Panc1 (cell line): ENCODE measurements at regions of chr7 and their contacts with region 1.

Region 1: GRCh38 chr7:79282063-79282694 is 171.3 kb downstream of the MAGI2 start:
- DNase-seq: peak; percentile 73
- ATAC-seq: peak; percentile 86
- H3K4me3 ChIP-seq: peak overlapping the region in 1 of 2 experiments; percentile 32; a peak in 2 of 4 replicates
- H3K27ac ChIP-seq: peak overlapping the region; percentile 97
- H3K4me1 ChIP-seq: peaks cover 46% of the 10 kb centered on the region
- H3K27me3 ChIP-seq: no peaks in the 10 kb centered on the region
- CTCF ChIP-seq: peak; percentile 75

Region 2: DNA sequence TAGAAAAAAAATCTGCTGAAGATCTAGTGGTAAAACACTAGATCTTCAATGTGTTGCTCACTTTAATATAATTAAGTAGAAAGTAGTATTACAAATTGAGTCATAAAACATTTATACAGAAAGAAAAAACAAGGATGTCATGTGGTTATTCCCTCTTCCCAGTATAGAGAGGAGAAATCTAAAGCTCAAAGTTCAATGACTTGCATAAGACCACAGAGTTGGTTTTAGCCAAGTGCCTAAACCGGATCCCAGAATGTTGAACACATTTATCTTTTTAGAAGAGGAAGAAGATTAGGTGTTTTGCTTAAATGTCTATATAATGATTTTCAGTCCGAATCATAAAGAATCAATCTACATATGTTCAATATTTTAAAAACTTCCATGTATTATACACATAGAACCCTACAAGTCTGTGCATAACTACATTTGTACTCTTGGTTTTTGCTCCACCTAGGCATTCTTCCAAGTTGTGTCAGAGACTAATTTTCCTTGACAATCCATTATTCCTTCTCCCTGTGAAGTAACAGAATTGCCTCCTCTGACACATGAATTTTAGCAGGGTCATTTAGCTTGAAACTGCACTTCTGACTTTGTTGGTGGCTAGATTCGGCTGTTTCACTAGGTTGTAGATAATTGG is 217.9 kb before region 1 on chr7:
- CTCF ChIA-PET with region 1: no interaction called
- POLR2A ChIA-PET with region 1: no interaction called
- in situ Hi-C with region 1: no loop called
- intact Hi-C with region 1: no loop called
- DNase-seq: no peak
- ATAC-seq: no peak
- H3K4me3 ChIP-seq: no peak overlapping the region
- H3K27ac ChIP-seq: no peak overlapping the region
- H3K4me1 ChIP-seq: no peaks in the 10 kb centered on the region
- H3K27me3 ChIP-seq: no peaks in the 10 kb centered on the region
- CTCF ChIP-seq: no peak

Region 3: GRCh38 chr7:79590916-79591623 is 308.9 kb after region 1 on chr7:
- CTCF ChIA-PET with region 1: no interaction called
- POLR2A ChIA-PET with region 1: no interaction called
- in situ Hi-C with region 1: no loop called
- intact Hi-C with region 1: no loop called
- DNase-seq: no peak
- ATAC-seq: no peak
- H3K4me3 ChIP-seq: no peak overlapping the region
- H3K27ac ChIP-seq: no peak overlapping the region
- H3K4me1 ChIP-seq: no peaks in the 10 kb centered on the region; the same call in 1 of the 2 replicates
- H3K27me3 ChIP-seq: no peaks in the 10 kb centered on the region
- CTCF ChIP-seq: no peak

Region 4: DNA sequence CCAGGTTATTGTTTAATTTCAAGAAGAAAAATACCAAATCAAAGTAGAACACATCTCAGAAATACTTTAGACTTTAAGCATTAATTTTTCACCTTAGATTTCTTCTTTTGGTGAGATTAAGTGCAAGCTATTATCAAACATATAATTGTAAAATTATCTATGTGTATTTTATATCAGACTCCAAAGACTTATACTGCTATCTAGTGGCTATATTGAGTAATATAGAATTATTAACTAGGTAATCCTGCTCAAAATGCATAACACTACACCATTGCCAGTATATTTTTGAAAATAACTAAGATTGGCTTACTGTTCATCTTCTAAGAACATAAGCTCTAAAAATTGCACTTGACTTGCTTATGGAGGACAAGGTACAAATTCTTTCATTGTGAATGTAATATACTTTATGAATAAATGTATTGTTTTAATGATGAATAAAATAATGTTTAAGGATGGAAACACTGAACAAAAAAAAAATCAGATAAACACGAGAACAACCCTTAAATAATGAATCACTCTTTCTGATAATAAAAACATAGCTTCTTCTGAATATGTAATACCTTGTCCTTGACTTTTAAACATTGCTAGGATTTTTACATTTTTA is 765.8 kb after region 1 on chr7:
- CTCF ChIA-PET with region 1: no interaction called
- POLR2A ChIA-PET with region 1: no interaction called
- in situ Hi-C with region 1: no loop called
- intact Hi-C with region 1: loop called (anchors 10 kb)
- DNase-seq: no peak
- ATAC-seq: no peak
- H3K4me3 ChIP-seq: no peak overlapping the region
- H3K27ac ChIP-seq: no peak overlapping the region; the same call in 1 of the 2 replicates
- H3K4me1 ChIP-seq: peaks cover 6% of the 10 kb centered on the region; the same call in 1 of the 2 replicates
- H3K27me3 ChIP-seq: no peaks in the 10 kb centered on the region
- CTCF ChIP-seq: peak; percentile 23; the same call in 1 of the 2 replicates

Region 5: DNA sequence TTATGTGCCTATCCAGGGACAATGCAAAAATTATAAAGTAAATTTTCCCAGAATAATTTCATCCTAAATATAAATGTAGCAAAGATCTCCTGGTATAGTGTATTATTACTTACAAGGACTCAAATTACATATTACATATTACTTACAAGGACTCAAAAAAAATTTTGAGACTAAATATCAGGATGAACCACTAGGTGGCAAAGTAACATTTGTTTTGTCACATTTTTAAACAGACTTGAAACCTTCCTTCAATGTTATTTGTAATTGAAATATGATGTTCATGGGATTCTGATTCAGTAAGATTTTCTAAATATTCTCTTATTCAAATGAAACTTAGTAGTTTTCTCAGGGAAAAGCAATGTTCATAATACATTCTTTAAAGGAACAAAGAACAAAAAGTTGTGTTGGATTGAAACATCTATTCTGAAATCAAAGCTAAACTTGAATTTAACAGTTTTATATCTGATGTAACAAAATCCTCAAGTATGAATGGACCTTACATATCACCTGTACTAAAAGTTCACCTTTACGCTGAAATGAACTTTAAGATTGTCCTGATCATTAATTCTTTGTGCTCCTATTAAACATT is 778.1 kb after region 1 on chr7:
- CTCF ChIA-PET with region 1: interaction called, 12 read pairs
- POLR2A ChIA-PET with region 1: no interaction called
- in situ Hi-C with region 1: no loop called
- intact Hi-C with region 1: no loop called
- DNase-seq: peak; percentile 62
- ATAC-seq: no peak
- H3K4me3 ChIP-seq: no peak overlapping the region
- H3K27ac ChIP-seq: no peak overlapping the region
- H3K4me1 ChIP-seq: no peaks in the 10 kb centered on the region
- H3K27me3 ChIP-seq: no peaks in the 10 kb centered on the region
- CTCF ChIP-seq: peak; percentile 18; the same call in 1 of the 2 replicates